Gastrocnemius medialis (tissue), 4 donors: ENCODE measurements at regions of chrX and their contacts with region 1.

Region 1: GRCh38 chrX:47523297-47523696 is 37.7 kb upstream of the ARAF start:
- DNase-seq: peak; percentile 50 to 70
- ATAC-seq: peak; percentile 85 to 96
- H3K4me3 ChIP-seq: peak overlapping the region; percentile 54 to 64 (median 60)
- H3K27ac ChIP-seq: peak overlapping the region in 2 of 4 donors; percentile 26 to 31
- H3K4me1 ChIP-seq: no peaks in the 10 kb centered on the region
- H3K27me3 ChIP-seq: no peaks in the 10 kb centered on the region
- CTCF ChIP-seq: peak; percentile 63 to 88 (median 85)
- POLR2A ChIP-seq: no peak

Region 2: GRCh38 chrX:47233337-47234113 is 289.8 kb before region 1 on chrX:
- in situ Hi-C with region 1: no loop called
- intact Hi-C with region 1: loop called (anchors 5 kb)
- DNase-seq: peak; percentile 91 to 94
- ATAC-seq: peak; percentile 92 to 94
- H3K4me3 ChIP-seq: peak overlapping the region; percentile 57 to 84 (median 74)
- H3K27ac ChIP-seq: peak overlapping the region; percentile 88 to 93 (median 91)
- H3K4me1 ChIP-seq: peaks cover 0 to 3% of the 10 kb centered on the region in 2 donors
- H3K27me3 ChIP-seq: no peaks in the 10 kb centered on the region
- CTCF ChIP-seq: no peak
- POLR2A ChIP-seq: peak; percentile 36 to 76

Region 3: GRCh38 chrX:47384502-47384901 is 138.8 kb before region 1 on chrX:
- in situ Hi-C with region 1: loop called in 2 of 4 experiments (anchors 10 to 25 kb)
- intact Hi-C with region 1: loop called (anchors 2 kb)
- DNase-seq: peak; percentile 9 to 29
- ATAC-seq: peak in 1 of 2 donors; percentile 61
- H3K4me3 ChIP-seq: no peak overlapping the region
- H3K27ac ChIP-seq: no peak overlapping the region
- H3K4me1 ChIP-seq: no peaks in the 10 kb centered on the region
- H3K27me3 ChIP-seq: no peaks in the 10 kb centered on the region
- CTCF ChIP-seq: peak; percentile 25 to 78 (median 55)
- POLR2A ChIP-seq: no peak

Region 4: DNA sequence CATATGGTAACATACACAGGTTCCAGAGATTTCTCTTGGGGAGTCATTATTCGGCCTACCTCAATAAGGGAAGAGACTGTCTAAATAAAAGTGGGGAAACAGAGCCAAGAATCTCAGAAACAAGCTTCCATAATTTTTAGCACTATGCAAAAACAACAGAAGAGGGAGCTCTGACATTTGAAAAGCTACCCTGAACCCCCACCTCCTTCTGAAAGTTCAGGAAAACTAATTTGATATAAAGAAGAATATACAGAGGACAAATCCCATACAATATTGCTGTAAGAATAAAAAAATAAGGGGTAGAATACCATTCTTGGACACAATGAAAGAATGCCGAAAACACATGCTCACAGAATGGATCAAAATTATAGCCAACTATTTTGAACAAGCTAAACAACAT is 26.0 kb before region 1 on chrX:
- in situ Hi-C with region 1: no loop called
- intact Hi-C with region 1: loop called (anchors 2 kb)
- DNase-seq: no peak
- ATAC-seq: no peak
- H3K4me3 ChIP-seq: no peak overlapping the region
- H3K27ac ChIP-seq: no peak overlapping the region
- H3K4me1 ChIP-seq: peaks cover 9 to 15% of the 10 kb centered on the region in 2 donors
- H3K27me3 ChIP-seq: no peaks in the 10 kb centered on the region
- CTCF ChIP-seq: peak in 1 of 5 experiments; percentile 18
- POLR2A ChIP-seq: no peak

Region 5: GRCh38 chrX:47507153-47507867 is 16.0 kb before region 1 on chrX:
- in situ Hi-C with region 1: no loop called
- intact Hi-C with region 1: no loop called
- DNase-seq: no peak
- ATAC-seq: no peak
- H3K4me3 ChIP-seq: no peak overlapping the region
- H3K27ac ChIP-seq: no peak overlapping the region
- H3K4me1 ChIP-seq: no peaks in the 10 kb centered on the region
- H3K27me3 ChIP-seq: peaks cover 0 to 3% (median 0%) of the 10 kb centered on the region in 3 donors
- CTCF ChIP-seq: no peak
- POLR2A ChIP-seq: no peak